PC-9 (cell line): ENCODE measurements at regions of chr9 and their contacts with region 1.

Region 1: DNA sequence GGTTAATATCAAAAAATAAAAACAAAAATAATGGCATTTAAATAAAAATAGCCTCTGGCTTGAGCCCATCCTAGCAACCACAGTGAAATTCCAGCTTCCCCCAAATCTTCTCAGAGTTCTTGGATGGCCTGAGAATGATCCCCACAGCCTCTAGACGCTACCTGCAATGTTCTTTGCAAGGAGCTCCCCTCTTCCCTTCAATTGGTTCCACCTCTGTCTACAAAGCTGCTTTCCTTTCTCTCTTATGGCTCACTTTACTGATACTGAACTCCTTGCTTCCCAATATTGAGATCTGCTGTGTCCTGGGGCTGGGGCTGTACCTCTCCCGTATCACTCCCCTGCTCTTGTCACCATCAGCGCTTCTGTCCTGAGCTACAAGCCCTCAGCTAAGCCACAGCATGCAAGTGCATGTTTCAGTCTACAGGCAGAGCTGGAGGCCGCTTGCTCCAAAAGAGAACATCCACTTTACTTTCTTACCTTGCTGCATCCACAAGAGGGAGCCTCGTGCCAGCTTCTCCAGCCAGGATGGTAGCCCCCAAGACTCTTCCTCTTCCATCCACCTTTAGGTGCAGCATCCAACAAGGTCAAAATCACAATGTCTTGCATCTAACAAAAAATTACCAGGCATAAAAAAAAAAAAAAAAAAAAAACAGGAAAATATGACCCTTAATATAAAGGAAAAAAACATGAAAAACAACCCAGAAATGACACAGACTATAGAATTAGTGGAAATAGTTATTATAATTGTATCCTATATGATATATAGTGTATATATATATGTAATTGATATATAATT is 57.4 kb upstream of the PRSS3 start:
- DNase-seq: peak; percentile 38 to 43
- H3K4me3 ChIP-seq: no peak overlapping the region
- H3K27ac ChIP-seq: no peak overlapping the region
- H3K4me1 ChIP-seq: peaks cover 27% of the 10 kb centered on the region
- H3K27me3 ChIP-seq: no peaks in the 10 kb centered on the region
- CTCF ChIP-seq: peak; percentile 72

Region 2: GRCh38 chr9:33187519-33188218 is 550.3 kb before region 1 on chr9:
- CTCF ChIA-PET with region 1: no interaction called
- POLR2A ChIA-PET with region 1: no interaction called
- intact Hi-C with region 1: no loop called
- DNase-seq: no peak
- H3K4me3 ChIP-seq: no peak overlapping the region
- H3K27ac ChIP-seq: no peak overlapping the region
- H3K4me1 ChIP-seq: peaks cover 28% of the 10 kb centered on the region
- H3K27me3 ChIP-seq: no peaks in the 10 kb centered on the region
- CTCF ChIP-seq: no peak

Region 3: DNA sequence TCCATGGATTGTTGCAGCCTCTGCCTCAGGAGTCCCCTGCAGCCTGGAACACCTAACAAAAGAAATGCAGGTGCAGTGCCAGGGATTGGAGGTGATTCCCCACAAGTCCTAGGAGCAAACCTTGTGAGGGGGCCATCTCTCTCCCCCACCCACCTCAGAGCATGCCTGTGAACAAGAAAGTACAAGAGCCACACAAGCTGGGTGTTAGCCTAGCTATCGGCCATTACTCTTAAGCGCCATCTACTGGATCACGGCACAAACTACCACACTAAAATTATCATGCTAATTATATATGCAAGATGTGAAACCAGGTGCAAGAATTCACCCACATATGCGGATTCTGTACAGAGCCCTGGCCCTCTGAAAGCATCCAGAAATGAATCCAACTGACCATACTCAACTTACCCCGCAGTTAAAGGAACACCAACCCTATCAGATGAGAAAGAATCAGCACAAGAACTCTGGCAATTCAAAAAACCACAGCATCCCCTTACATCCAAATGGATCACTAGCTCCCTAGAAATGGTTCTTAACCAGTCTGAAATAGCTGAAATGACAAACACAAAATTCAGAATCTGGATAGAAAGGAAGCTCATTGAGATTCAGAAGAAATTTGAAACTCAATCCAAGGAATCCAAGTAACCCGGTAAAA is 40.8 kb after region 1 on chr9:
- CTCF ChIA-PET with region 1: interaction called, 13 read pairs
- POLR2A ChIA-PET with region 1: interaction called, 8 read pairs
- intact Hi-C with region 1: loop called (anchors 1 kb)
- DNase-seq: peak; percentile 44 to 60
- H3K4me3 ChIP-seq: peak overlapping the region; percentile 47
- H3K27ac ChIP-seq: peak overlapping the region; percentile 84
- H3K4me1 ChIP-seq: peaks cover 62% of the 10 kb centered on the region
- H3K27me3 ChIP-seq: no peaks in the 10 kb centered on the region
- CTCF ChIP-seq: peak; percentile 85

Region 4: DNA sequence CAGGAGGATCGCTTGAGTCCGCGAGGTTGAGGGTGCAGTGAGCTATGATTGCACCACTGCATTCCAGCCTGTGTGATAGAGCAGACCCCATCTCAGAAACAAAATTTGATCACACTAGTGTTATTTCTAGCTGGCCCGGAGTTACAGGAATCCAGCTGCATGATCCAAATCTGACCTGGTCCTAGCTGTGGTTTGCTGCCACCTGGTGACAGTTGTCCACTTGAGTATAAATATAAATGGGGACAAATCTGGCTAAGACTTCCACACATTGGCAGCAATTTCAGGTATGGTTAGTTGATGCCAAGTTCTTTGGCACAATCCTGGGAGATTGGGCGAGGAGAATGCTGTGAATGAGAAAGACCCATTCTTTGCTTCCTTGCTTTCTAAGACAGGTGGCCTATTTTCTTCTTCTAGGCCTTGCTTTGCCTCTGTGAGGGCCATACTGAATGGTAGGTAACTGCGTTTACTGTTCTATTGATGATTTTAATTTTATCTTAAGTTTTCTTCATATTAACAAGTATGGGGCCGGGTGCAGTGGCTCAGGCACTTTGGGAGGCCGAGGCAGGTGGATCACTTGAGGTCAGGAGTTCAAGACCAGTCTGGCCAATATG is 114.3 kb after region 1 on chr9:
- CTCF ChIA-PET with region 1: interaction called, 4 read pairs
- POLR2A ChIA-PET with region 1: no interaction called
- intact Hi-C with region 1: loop called (anchors 2 kb)
- DNase-seq: peak in 1 of 2 experiments; percentile 35
- H3K4me3 ChIP-seq: no peak overlapping the region
- H3K27ac ChIP-seq: no peak overlapping the region
- H3K4me1 ChIP-seq: peaks cover 19% of the 10 kb centered on the region
- H3K27me3 ChIP-seq: no peaks in the 10 kb centered on the region
- CTCF ChIP-seq: peak; percentile 70

Region 5: DNA sequence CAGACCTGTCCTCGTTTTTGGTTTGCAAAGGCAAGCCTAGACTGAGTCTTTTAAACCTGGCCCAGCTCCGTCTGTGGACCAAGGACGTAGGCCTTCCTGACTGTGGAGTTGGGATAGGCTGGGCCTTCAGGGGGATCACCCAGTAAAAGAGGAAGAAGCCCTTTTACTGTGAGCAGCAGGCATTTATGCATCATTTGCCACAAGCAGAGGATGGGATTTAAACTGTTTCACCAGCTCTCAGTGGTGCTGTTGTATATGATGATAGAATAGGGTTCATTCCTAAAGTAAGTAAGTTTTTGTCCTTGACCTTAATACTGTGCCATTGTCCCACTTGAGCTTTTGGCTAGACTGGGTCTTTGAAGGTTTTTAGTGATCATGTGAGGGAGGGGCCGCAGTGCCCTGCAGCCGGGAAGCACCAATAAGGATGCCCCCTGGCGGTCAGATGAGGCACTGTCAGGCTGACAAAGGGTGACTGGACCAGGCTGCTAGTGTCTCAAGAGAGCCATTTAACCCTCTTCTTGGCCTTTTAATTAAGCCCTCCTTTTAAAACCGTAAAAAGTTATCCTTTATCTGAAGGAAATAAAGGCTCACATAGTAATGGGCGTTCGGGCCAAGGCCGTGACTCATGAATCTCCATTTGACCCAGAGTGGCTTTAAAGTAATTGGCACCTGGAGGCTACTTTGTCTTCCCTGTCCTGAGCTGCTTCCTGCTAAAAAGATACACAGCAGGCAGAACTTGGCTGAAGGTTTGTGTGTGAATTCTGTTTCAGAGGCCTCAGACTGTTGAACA is 514.9 kb after region 1 on chr9:
- CTCF ChIA-PET with region 1: no interaction called
- POLR2A ChIA-PET with region 1: no interaction called
- intact Hi-C with region 1: no loop called
- DNase-seq: peak in 1 of 2 experiments; percentile 56
- H3K4me3 ChIP-seq: no peak overlapping the region
- H3K27ac ChIP-seq: peak overlapping the region; percentile 42; the same call in 1 of the 2 replicates
- H3K4me1 ChIP-seq: peaks cover 27% of the 10 kb centered on the region
- H3K27me3 ChIP-seq: no peaks in the 10 kb centered on the region
- CTCF ChIP-seq: peak; percentile 89